ENCODE measurements at regions of chr5 and their contacts with region 1.

Region 1: GRCh38 chr5:135488727-135489465 is 36.7 kb upstream of the TIFAB start:
- DNase-seq: peak; percentile 89
- H3K4me3 Mint-ChIP-seq: peak overlapping the region; percentile 62
- H3K27ac Mint-ChIP-seq: peak overlapping the region; percentile 52
- H3K4me1 Mint-ChIP-seq: peaks cover 34% of the 10 kb centered on the region
- H3K27me3 Mint-ChIP-seq: no peaks in the 10 kb centered on the region
- CTCF ChIP-seq: no peak

Region 2: DNA sequence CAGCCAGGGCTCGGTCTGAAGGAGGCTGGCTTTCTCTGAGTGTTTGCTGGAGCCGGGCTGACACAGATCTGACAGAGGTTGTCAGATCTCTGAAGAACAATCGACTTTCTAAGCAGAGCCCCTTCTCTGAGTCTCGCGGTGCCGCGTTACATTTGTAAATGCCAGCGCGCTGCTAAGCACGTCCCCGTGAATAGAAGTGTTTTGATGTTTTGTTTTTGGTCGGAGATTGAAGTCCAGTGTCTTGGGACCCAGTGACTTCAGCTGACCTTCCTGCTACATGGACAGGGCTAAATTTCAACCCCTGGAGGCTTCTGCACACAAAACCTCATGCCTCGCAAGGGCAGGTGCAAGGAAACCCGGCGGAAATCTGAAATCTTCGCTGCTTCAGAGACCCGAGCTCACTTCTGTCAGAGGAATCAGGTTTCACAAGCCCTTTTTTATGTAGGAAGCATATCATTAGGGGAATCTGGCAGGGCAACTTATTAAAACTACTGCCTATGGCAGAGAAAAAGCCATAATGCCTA is 19.6 kb after region 1 on chr5:
- CTCF ChIA-PET with region 1: interaction called, 7 read pairs
- POLR2A ChIA-PET with region 1: interaction called, 13 read pairs
- intact Hi-C with region 1: loop called (anchors 1 kb)
- DNase-seq: no peak
- H3K4me3 Mint-ChIP-seq: no peak overlapping the region
- H3K27ac Mint-ChIP-seq: no peak overlapping the region
- H3K4me1 Mint-ChIP-seq: peaks cover 9% of the 10 kb centered on the region
- H3K27me3 Mint-ChIP-seq: no peaks in the 10 kb centered on the region
- CTCF ChIP-seq: no peak

Measured in MCF 10A (cell line).